HEK293T (cell line): ENCODE measurements at regions of chr5 and their contacts with region 1.

Region 1: DNA sequence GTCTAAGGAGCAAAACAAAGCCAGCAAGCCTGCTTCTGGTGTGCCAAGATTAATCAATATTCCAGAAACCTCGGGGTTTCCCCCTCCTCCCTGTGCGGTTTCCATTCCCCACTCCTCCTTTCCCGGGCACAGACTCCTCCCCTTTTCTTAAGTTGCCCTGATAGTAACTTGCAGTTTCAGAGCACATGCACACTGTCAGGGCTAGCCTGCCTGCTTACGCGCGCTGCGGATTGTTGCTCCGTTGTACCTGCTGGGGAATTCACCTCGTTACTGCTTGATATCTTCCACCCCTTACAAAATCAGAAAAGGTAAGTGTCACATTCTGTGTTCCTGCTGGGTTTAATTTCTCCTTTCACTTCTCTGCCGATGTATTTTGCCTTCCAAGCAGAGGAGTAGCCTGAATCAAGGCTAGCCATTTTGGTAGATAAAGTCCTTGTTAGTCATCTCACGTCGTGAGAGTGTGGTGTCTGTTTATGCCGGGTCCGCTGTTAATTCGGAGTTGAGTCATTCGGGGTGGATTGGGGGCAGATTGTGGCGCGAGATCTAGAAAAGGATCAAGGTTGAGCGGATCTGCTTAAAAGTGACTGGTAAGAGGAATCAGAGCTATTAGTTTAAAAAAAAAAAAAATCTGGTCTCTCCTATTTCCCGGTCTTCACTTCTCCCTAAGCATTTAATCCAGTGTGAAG is at the start of gene SLC1A3:
- DNase-seq: peak; percentile 78

Region 2: DNA sequence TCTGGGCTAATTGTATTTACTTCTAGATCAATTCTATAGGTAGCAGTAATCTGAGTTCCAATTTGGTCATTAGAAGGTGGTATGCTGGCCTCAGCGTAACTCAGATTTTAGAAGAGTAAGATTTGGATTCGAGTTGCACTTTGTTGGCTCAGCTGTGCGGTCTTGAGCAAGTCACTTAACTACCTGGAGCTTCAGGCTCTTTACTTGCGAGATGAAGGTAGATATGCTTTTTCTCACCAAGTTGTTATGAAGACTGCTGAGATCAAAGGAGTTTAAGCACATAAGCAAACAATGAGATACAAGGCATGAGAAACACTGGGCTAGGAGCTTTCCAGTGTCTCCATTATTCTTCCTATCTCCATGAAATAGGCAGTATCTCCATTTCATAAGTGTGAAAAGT is 171.1 kb before region 1 on chr5:
- CTCF ChIA-PET with region 1: no interaction called
- POLR2A ChIA-PET with region 1: no interaction called
- DNase-seq: no peak

Region 3: GRCh38 chr5:36624277-36624676 is 17.7 kb after region 1 on chr5:
- CTCF ChIA-PET with region 1: no interaction called
- POLR2A ChIA-PET with region 1: no interaction called
- DNase-seq: no peak

Region 4: DNA sequence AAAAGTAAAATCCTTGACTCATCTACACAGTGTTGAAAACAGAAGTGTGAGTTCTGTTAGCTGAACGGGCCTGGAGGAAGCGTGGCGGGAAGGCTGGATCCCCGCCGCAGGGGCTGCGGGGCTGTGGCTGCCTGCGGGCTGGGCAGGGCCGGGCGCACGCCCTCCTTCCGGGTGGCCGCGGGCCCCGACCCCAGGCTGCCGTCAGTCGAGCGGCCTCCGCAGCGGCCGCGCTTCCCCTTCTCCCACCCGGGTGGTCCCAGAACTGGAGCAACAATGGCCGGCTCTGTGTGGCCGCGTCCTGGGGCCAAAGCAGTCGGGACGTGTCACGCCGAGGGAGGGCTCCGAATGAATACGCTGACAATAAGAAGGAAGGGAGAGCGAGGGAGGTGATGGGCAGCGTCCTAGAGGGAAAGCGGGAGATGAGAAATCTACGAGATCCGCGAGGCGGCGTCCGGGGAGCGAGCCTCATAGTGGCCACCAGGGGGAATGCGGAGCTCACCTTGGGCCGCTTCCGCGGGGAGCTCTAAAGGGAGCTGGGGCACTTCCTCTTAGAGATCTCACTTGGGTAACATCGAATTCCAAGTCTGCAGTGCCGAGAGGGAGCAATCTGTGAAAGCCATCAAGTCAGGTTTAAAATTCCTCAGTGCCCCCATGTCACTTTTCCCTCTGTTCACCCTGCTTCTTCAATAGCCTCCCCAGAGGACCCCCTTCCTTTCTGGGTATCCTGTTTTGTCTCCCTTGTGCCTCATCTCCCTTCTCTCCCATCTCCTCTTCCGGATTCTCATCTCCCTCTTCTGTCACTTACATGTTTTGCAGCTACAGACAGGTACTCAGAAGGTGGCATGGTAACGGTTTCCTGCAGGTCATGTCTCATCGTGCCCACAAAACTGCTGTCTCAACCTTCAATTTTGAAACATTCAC is 83.7 kb after region 1 on chr5:
- CTCF ChIA-PET with region 1: interaction called, 6 read pairs
- POLR2A ChIA-PET with region 1: interaction called, 14 read pairs
- DNase-seq: peak; percentile 84